ENCODE measurements at regions of chr17 and their contacts with region 1.

Region 1: DNA sequence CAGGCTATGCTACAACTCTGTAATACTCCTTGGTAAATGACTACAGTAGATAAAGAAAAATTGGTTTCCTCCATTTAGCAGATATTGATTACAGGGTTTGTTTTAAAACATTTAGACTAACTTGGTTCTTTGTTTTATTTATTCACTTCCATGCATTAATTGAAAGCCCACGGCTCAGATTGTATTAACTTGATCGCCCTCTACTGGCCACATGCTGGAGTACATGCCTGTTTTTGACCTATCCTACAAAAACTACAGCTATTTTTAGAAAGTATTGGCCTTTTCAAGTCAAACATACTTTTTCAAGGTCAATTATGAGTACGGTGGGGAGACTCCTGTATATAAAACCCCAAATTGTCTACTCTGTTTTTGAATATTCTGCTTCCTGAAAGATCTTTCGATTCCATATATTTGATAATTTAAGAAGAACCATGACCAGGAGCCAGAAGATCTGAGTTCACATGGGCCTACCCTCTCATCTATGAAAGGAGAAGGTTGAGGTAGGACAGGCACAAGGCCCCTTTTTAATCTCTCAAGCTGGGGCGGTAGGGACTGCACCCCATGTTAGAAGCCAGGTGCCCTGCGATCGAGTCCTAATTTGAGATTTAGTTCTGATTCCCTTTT is 51.8 kb downstream of the CA10 start:
- DNase-seq: no peak
- ATAC-seq: no peak
- H3K4me3 ChIP-seq: no peak overlapping the region
- H3K27ac ChIP-seq: no peak overlapping the region
- H3K4me1 ChIP-seq: no peaks in the 10 kb centered on the region
- H3K27me3 ChIP-seq: no peaks in the 10 kb centered on the region
- CTCF ChIP-seq: peak; percentile 66 to 76 (median 66)
- EP300 ChIP-seq: no peak
- POLR2A ChIP-seq: no peak
- RAD21 ChIP-seq: peak; percentile 63

Region 2: DNA sequence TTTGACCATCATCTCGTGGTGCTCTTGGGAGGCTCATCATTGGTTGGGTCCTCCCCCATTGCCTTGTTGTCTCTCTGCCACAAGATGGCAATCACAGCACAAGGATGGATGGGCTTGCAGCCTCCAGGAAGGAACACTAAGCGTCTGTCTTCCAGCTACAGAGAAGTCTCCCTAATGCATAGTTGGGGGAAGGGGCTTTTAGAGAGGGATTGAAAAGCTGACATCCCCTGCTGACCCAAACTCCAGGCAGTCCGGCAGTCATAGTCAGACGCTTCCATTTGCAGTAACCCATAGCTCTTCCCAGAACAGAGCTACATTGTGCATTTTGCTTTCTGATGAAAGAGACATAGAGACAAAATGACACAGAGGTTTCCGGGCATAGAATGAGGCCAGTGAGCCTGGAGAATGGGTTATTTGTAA is 735.0 kb before region 1 on chr17:
- CTCF ChIA-PET with region 1: interaction called, 4 read pairs
- POLR2A ChIA-PET with region 1: no interaction called
- RAD21 ChIA-PET with region 1: no interaction called
- SMC1A ChIA-PET with region 1: no interaction called
- in situ Hi-C with region 1: no loop called
- intact Hi-C with region 1: loop called (anchors 2 kb)
- DNase-seq: peak; percentile 28
- ATAC-seq: peak; percentile 92
- H3K4me3 ChIP-seq: peak overlapping the region; percentile 63; the same call in 1 of the 2 replicates
- H3K27ac ChIP-seq: 0 out of 2 replicates have a peak overlapping the region, but pooled peaks have one; percentile 50
- H3K4me1 ChIP-seq: peaks cover 3% of the 10 kb centered on the region; the same call in 1 of the 2 replicates
- H3K27me3 ChIP-seq: no peaks in the 10 kb centered on the region
- CTCF ChIP-seq: peak; percentile 50 to 74 (median 62)
- EP300 ChIP-seq: no peak
- POLR2A ChIP-seq: no peak
- RAD21 ChIP-seq: peak; percentile 72

Region 3: DNA sequence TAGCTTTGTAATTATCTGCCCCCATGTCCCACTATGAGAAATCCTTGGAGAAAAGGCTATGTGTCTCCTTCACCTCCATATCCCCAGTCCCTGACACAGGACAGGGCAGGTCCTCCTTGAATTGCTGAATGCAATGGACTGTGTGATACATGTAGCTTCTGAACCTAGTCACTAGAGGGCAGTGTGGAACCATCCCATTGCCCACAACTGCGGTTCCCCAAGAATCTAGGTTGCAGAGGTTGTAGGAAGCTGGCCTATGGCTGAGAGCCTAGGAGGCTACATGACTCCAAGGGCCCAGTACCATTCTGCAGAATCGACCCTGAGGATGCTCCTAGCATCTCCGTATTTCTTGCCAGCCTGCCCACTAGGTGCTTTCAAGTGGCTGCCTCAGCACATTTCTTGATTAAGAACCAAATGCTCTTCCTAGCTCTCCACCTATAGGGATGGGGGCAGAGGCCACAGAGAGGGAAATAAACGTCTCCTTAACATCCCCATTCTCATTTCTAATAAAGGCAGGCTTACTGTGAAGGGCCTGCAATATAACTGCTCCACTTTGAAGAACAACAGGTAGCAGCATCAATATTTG is 342.3 kb before region 1 on chr17:
- CTCF ChIA-PET with region 1: interaction called, 44 read pairs
- POLR2A ChIA-PET with region 1: no interaction called
- RAD21 ChIA-PET with region 1: interaction called, 10 read pairs
- SMC1A ChIA-PET with region 1: interaction called, 7 read pairs
- in situ Hi-C with region 1: loop called (anchors 5 kb)
- intact Hi-C with region 1: loop called (anchors 1 kb)
- DNase-seq: peak; percentile 4
- ATAC-seq: peak; percentile 96
- H3K4me3 ChIP-seq: no peak overlapping the region
- H3K27ac ChIP-seq: no peak overlapping the region
- H3K4me1 ChIP-seq: no peaks in the 10 kb centered on the region
- H3K27me3 ChIP-seq: no peaks in the 10 kb centered on the region
- CTCF ChIP-seq: peak; percentile 78 to 88 (median 87)
- EP300 ChIP-seq: no peak
- POLR2A ChIP-seq: no peak
- RAD21 ChIP-seq: peak; percentile 85

Region 4: DNA sequence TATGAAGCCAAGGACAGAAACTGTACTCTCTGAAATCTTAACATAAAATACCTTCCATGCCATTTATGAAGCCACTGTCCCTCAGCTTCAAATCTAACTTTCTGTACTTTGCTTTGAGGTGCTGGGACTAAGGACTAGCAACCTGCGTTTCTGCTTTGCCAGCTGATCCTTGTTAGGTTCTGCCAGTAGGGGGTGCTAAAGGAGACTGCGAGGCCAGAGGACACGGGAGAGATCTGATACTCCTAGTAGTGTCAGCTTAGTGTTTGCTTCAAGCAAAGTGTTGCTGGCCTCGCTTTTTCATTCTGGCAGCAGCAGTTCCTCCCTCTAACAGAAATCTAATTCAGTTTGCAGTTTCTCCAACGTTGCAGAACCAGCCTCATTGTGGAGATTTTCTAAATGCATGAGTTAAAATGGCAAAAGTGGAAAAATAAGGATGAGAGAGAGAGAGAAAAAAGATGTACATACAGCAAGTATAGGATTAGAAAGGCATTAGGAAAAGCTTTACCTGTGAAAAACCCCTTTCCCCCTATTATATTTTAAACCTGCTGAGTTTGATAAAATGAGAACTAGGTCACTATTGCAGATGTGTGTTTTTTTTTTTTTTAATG is 245.7 kb before region 1 on chr17:
- CTCF ChIA-PET with region 1: interaction called, 21 read pairs
- POLR2A ChIA-PET with region 1: no interaction called
- RAD21 ChIA-PET with region 1: interaction called, 4 read pairs
- SMC1A ChIA-PET with region 1: no interaction called
- in situ Hi-C with region 1: no loop called
- intact Hi-C with region 1: loop called (anchors 1 kb)
- DNase-seq: no peak
- ATAC-seq: no peak
- H3K4me3 ChIP-seq: no peak overlapping the region
- H3K27ac ChIP-seq: no peak overlapping the region
- H3K4me1 ChIP-seq: no peaks in the 10 kb centered on the region
- H3K27me3 ChIP-seq: no peaks in the 10 kb centered on the region; a peak in 1 of 4 replicates
- CTCF ChIP-seq: peak; percentile 54 to 73 (median 57); a peak in 3 of 6 replicates
- EP300 ChIP-seq: no peak
- POLR2A ChIP-seq: no peak
- RAD21 ChIP-seq: peak; percentile 40

Region 5: DNA sequence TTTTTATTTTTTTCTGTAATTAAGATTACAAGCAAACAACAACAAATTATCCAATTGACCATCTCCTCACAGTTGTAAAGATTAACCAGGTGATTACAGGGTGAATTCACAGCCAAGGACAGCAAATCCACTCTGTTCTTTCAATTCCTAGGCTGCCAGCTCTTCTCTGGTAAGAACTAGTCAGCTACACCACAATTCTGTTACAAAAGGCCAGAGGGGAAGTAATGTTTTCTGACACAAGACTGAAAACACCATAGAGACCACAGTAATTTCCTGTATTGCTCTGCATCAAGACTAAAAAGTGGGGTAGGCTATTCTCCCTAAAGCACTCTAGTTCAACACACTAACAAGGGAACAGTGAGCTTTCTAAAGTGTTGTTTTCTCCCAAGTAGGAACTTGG is 41.1 kb after region 1 on chr17:
- CTCF ChIA-PET with region 1: no interaction called
- POLR2A ChIA-PET with region 1: no interaction called
- RAD21 ChIA-PET with region 1: no interaction called
- SMC1A ChIA-PET with region 1: no interaction called
- in situ Hi-C with region 1: no loop called
- intact Hi-C with region 1: no loop called
- DNase-seq: no peak
- ATAC-seq: peak; percentile 89
- H3K4me3 ChIP-seq: no peak overlapping the region
- H3K27ac ChIP-seq: no peak overlapping the region
- H3K4me1 ChIP-seq: no peaks in the 10 kb centered on the region
- H3K27me3 ChIP-seq: no peaks in the 10 kb centered on the region
- CTCF ChIP-seq: no peak
- EP300 ChIP-seq: peak in 1 of 2 experiments; percentile 30; a peak in 1 of 4 replicates
- POLR2A ChIP-seq: no peak
- RAD21 ChIP-seq: no peak

Region 6: GRCh38 chr17:52159246-52160135 is 52.7 kb after region 1 on chr17:
- CTCF ChIA-PET with region 1: interaction called, 3 read pairs
- POLR2A ChIA-PET with region 1: no interaction called
- RAD21 ChIA-PET with region 1: no interaction called
- SMC1A ChIA-PET with region 1: no interaction called
- in situ Hi-C with region 1: loop called (anchors 10 kb)
- intact Hi-C with region 1: no loop called
- DNase-seq: no peak
- ATAC-seq: no peak
- H3K4me3 ChIP-seq: no peak overlapping the region
- H3K27ac ChIP-seq: no peak overlapping the region
- H3K4me1 ChIP-seq: no peaks in the 10 kb centered on the region
- H3K27me3 ChIP-seq: no peaks in the 10 kb centered on the region
- CTCF ChIP-seq: no peak
- EP300 ChIP-seq: no peak
- POLR2A ChIP-seq: no peak
- RAD21 ChIP-seq: no peak